ENCODE measurements at regions of chr18 and their contacts with region 1.

Region 1: DNA sequence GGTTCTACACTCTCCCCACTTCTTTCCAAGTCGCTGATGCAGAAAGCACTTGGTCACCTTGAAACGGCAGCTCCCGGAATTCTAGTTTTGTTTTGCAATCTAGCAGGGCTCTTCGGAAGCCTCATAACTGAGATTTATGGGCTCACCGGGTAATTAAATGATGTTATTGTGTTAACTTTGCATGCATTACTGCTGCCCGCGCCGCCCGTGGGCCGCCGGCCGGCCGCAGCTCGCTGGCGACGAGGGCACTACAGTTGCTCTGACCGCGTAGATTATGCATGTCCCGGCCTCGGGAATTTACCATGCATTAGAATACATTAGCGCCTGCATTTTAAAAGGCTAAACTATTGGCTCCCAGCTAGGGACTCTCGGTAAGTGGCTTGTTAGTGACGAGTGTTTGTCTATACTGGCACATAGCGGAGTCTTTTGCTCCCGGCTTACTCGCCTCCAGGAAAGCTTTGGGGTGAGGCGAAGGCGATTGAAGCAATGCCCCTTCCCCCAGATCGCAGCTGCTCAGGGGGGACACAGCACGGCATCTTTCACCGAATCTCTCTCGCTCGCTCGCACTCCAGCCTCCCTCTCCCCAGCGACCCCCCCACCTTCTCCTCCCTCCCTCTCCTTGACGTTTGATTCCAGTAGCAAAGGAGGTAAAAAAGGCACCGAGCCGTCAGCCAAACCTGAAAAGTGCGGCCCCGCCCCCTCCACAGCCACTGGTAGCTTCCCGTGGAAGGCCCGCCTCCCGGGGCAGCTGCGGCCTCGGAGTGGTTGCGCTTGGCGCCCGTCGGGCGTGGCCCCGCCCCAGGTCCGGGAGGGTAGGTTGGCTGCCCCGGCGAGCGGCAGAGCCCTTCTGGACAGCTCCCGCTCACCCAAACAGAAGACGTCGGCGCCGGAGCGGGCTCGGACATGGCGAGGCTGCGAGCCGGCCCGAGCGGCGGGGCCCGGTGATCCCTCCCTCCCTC is at the start of gene ONECUT2:
- DNase-seq: peak; percentile 85
- ATAC-seq: peak; percentile 89
- H3K4me3 ChIP-seq: peak within 1 kb of the TSS; percentile 69 to 84 (median 78)
- H3K27ac ChIP-seq: no peak within 1 kb of the TSS
- H3K4me1 ChIP-seq: peaks cover 38% of the 10 kb centered on the region
- H3K27me3 ChIP-seq: peaks cover 0 to 14% of the 10 kb centered on the region in 2 experiments; a peak in 2 of 5 replicates
- CTCF ChIP-seq: 0 out of 2 replicates have a peak, but pooled peaks have one; percentile 3
- EP300 ChIP-seq: no peak
- POLR2A ChIP-seq: no peak
- RAD21 ChIP-seq: no peak
- total RNA-seq, gene ONECUT2: 3.0 and 6.2 TPM in 2 replicates

Region 2: GRCh38 chr18:56789004-56789888 is 645.6 kb before region 1 on chr18:
- CTCF ChIA-PET with region 1: interaction called, 5 read pairs
- POLR2A ChIA-PET with region 1: no interaction called
- in situ Hi-C with region 1: no loop called
- intact Hi-C with region 1: loop called (anchors 1 kb)
- DNase-seq: peak; percentile 33
- ATAC-seq: peak; percentile 65
- H3K4me3 ChIP-seq: no peak overlapping the region
- H3K27ac ChIP-seq: no peak overlapping the region
- H3K4me1 ChIP-seq: no peaks in the 10 kb centered on the region
- H3K27me3 ChIP-seq: no peaks in the 10 kb centered on the region
- CTCF ChIP-seq: peak; percentile 55
- EP300 ChIP-seq: no peak
- POLR2A ChIP-seq: no peak
- RAD21 ChIP-seq: no peak

Region 3: DNA sequence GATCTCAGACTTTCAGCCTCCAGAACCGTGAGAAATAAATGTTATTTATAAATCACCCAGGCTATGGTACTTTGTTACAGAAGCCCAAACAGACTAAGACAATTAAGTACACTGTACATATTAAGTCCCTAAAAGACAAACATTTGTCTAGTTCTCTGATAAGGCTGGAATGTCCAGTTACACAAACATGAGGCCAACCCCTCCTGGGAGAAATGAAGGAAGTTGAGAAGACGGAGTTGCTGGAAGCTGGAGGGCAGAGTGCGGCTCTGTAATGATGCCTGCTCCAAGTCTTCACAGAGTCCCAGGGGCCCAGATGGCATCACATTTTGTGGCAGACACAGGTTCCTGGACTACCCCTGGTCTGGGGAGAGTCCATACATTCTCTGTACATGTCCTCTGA is 161.6 kb before region 1 on chr18:
- CTCF ChIA-PET with region 1: no interaction called
- POLR2A ChIA-PET with region 1: no interaction called
- in situ Hi-C with region 1: no loop called
- intact Hi-C with region 1: loop called (anchors 5 kb)
- DNase-seq: peak; percentile 43
- ATAC-seq: peak; percentile 87
- H3K4me3 ChIP-seq: no peak overlapping the region
- H3K27ac ChIP-seq: no peak overlapping the region
- H3K4me1 ChIP-seq: peaks cover 12% of the 10 kb centered on the region
- H3K27me3 ChIP-seq: peaks cover 1 to 4% of the 10 kb centered on the region in 2 experiments; a peak in 3 of 5 replicates
- CTCF ChIP-seq: no peak
- EP300 ChIP-seq: peak in 1 of 2 experiments; percentile 38; a peak in 1 of 4 replicates
- POLR2A ChIP-seq: no peak
- RAD21 ChIP-seq: no peak

Region 4: GRCh38 chr18:57422313-57422872 is 12.4 kb before region 1 on chr18:
- CTCF ChIA-PET with region 1: no interaction called
- POLR2A ChIA-PET with region 1: interaction called, 30 read pairs
- in situ Hi-C with region 1: no loop called
- intact Hi-C with region 1: no loop called
- DNase-seq: peak; percentile 72
- ATAC-seq: peak; percentile 97
- H3K4me3 ChIP-seq: peak overlapping the region in 2 of 3 experiments; percentile 13 to 31; a peak in 1 of 6 replicates
- H3K27ac ChIP-seq: peak overlapping the region; percentile 52
- H3K4me1 ChIP-seq: peaks cover 44% of the 10 kb centered on the region
- H3K27me3 ChIP-seq: no peaks in the 10 kb centered on the region
- CTCF ChIP-seq: no peak
- EP300 ChIP-seq: peak in 1 of 2 experiments; percentile 86; a peak in 2 of 4 replicates
- POLR2A ChIP-seq: no peak
- RAD21 ChIP-seq: no peak

Region 5: DNA sequence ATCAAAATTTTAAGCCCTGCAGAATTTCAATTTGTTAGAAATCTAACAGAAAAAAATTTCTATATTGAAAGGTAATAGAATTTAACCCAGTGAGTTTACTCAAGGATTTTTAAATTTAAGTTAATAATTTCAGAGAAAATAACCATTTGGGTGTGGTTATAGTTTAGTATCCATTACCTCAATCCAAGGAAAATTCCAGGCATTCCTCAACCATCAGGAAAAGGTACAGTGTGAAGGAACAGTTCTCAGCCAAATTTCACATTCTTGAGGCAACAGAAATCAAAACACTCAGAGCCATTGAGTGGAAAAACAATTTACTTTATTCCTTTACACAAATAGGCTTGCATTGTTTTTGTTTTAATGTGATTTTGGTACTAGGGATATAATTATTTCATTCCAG is 45.9 kb after region 1 on chr18:
- CTCF ChIA-PET with region 1: no interaction called
- POLR2A ChIA-PET with region 1: no interaction called
- in situ Hi-C with region 1: no loop called
- intact Hi-C with region 1: no loop called
- DNase-seq: no peak
- ATAC-seq: no peak
- H3K4me3 ChIP-seq: no peak overlapping the region
- H3K27ac ChIP-seq: no peak overlapping the region
- H3K4me1 ChIP-seq: no peaks in the 10 kb centered on the region
- H3K27me3 ChIP-seq: no peaks in the 10 kb centered on the region
- CTCF ChIP-seq: no peak
- EP300 ChIP-seq: no peak
- POLR2A ChIP-seq: no peak
- RAD21 ChIP-seq: no peak

Region 6: GRCh38 chr18:57561728-57562423 is 127.1 kb after region 1 on chr18:
- CTCF ChIA-PET with region 1: interaction called, 4 read pairs
- POLR2A ChIA-PET with region 1: no interaction called
- in situ Hi-C with region 1: no loop called
- intact Hi-C with region 1: loop called (anchors 5 kb)
- DNase-seq: peak; percentile 47
- ATAC-seq: peak; percentile 45; the same call in 1 of the 3 replicates
- H3K4me3 ChIP-seq: no peak overlapping the region
- H3K27ac ChIP-seq: no peak overlapping the region
- H3K4me1 ChIP-seq: no peaks in the 10 kb centered on the region
- H3K27me3 ChIP-seq: no peaks in the 10 kb centered on the region
- CTCF ChIP-seq: peak; percentile 81
- EP300 ChIP-seq: no peak
- POLR2A ChIP-seq: no peak
- RAD21 ChIP-seq: peak; percentile 64; the same call in 1 of the 2 replicates